ENCODE measurements at regions of chr3 and their contacts with region 1.

Region 1: GRCh38 chr3:71681224-71681668 is 44.0 kb downstream of the EIF4E3 start:
- DNase-seq: peak; percentile 79
- H3K4me3 Mint-ChIP-seq: no peak overlapping the region
- H3K27ac Mint-ChIP-seq: no peak overlapping the region
- H3K4me1 Mint-ChIP-seq: peaks cover 10% of the 10 kb centered on the region
- H3K27me3 Mint-ChIP-seq: no peaks in the 10 kb centered on the region

Region 2: GRCh38 chr3:71532644-71533397 is 148.4 kb before region 1 on chr3:
- CTCF ChIA-PET with region 1: no interaction called
- intact Hi-C with region 1: no loop called
- DNase-seq: no peak
- H3K4me3 Mint-ChIP-seq: no peak overlapping the region
- H3K27ac Mint-ChIP-seq: no peak overlapping the region
- H3K4me1 Mint-ChIP-seq: peaks cover 25% of the 10 kb centered on the region
- H3K27me3 Mint-ChIP-seq: no peaks in the 10 kb centered on the region

Region 3: DNA sequence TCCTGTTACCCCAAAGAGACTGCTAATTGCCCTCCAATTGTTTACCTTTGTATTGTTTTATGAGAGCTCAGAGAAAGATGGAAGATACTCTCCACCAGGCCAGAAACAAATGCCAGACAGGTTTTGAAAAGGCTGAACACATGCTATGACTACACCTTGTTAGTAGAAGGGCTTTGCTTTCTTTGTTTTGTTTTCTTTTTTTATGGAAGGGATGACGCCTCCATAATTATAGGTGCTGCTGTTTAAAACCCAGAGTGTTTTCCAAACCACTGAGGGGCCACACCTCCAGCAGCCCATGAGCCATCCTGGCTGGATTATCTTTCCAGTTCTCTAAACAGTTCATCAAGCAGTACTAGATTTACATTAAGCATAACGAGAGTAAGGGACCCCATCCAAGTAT is 92.1 kb before region 1 on chr3:
- CTCF ChIA-PET with region 1: interaction called, 11 read pairs
- intact Hi-C with region 1: loop called (anchors 1 kb)
- DNase-seq: no peak
- H3K4me3 Mint-ChIP-seq: no peak overlapping the region
- H3K27ac Mint-ChIP-seq: no peak overlapping the region
- H3K4me1 Mint-ChIP-seq: peaks cover 30% of the 10 kb centered on the region
- H3K27me3 Mint-ChIP-seq: no peaks in the 10 kb centered on the region

Region 4: DNA sequence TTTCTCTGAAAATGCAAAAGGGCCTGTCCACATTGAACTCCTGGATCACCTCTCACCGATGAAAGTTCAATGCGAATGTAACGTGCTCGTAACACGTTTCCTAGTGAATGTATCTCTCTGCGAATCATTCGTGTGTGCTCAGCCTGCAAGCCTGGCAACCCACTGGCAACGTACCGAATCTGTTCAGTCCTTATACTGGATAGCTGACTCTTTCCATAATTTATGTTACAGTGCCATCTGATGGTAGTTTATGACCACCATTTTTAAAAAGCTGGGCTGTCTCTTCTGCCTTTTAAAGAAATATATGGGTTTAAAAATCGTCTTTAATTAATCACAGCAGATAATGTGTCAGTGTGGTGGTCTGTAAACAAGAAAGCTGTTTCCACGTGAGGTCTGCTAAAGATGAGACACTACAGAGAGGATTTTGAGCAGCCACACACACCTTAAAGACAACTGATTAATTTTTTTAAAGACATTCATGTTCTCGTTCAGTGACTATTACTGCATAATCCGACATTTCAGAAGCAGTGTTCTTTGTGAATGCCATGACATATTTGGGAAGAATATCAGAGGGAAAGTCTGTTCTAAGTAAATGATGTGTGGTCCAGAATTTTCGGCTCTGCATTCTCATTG is 28.3 kb before region 1 on chr3:
- CTCF ChIA-PET with region 1: no interaction called
- intact Hi-C with region 1: no loop called
- DNase-seq: peak; percentile 42
- H3K4me3 Mint-ChIP-seq: no peak overlapping the region
- H3K27ac Mint-ChIP-seq: no peak overlapping the region
- H3K4me1 Mint-ChIP-seq: peaks cover 4% of the 10 kb centered on the region
- H3K27me3 Mint-ChIP-seq: no peaks in the 10 kb centered on the region

Region 5: GRCh38 chr3:71710906-71711494 is 29.8 kb after region 1 on chr3:
- CTCF ChIA-PET with region 1: no interaction called
- intact Hi-C with region 1: no loop called
- DNase-seq: no peak
- H3K4me3 Mint-ChIP-seq: no peak overlapping the region
- H3K27ac Mint-ChIP-seq: no peak overlapping the region
- H3K4me1 Mint-ChIP-seq: peaks cover 50% of the 10 kb centered on the region
- H3K27me3 Mint-ChIP-seq: no peaks in the 10 kb centered on the region